ENCODE measurements at regions of chr15 and their contacts with region 1.

Region 1: GRCh38 chr15:35751413-35752133 is 205.6 kb upstream of the DPH6 start:
- DNase-seq: peak; percentile 64
- H3K4me3 ChIP-seq: no peak overlapping the region
- H3K4me3 Mint-ChIP-seq: peak overlapping the region; percentile 16
- H3K27ac Mint-ChIP-seq: no peak overlapping the region
- H3K4me1 ChIP-seq: no peaks in the 10 kb centered on the region
- H3K4me1 Mint-ChIP-seq: no peaks in the 10 kb centered on the region
- H3K27me3 ChIP-seq: no peaks in the 10 kb centered on the region
- H3K27me3 Mint-ChIP-seq: no peaks in the 10 kb centered on the region
- CTCF ChIP-seq: peak; percentile 68 to 76

Region 2: GRCh38 chr15:35545824-35546510 is 205.6 kb before region 1 on chr15 and contains the start of gene DPH6:
- CTCF ChIA-PET with region 1: no interaction called
- POLR2A ChIA-PET with region 1: no interaction called
- intact Hi-C with region 1: loop called (anchors 10 kb)
- DNase-seq: peak; percentile 89 to 90
- H3K4me3 ChIP-seq: peak within 1 kb of the TSS; percentile 48
- H3K4me3 Mint-ChIP-seq: peak within 1 kb of the TSS; percentile 92
- H3K27ac Mint-ChIP-seq: peak within 1 kb of the TSS; percentile 96
- H3K4me1 ChIP-seq: peaks cover 6% of the 10 kb centered on the region; the same call in 1 of the 2 replicates
- H3K4me1 Mint-ChIP-seq: peaks cover 12% of the 10 kb centered on the region
- H3K27me3 ChIP-seq: no peaks in the 10 kb centered on the region
- H3K27me3 Mint-ChIP-seq: no peaks in the 10 kb centered on the region
- CTCF ChIP-seq: peak in 1 of 2 experiments; percentile 11
- total RNA-seq, gene DPH6: 24.0 and 27.1 TPM in 2 replicates

Region 3: DNA sequence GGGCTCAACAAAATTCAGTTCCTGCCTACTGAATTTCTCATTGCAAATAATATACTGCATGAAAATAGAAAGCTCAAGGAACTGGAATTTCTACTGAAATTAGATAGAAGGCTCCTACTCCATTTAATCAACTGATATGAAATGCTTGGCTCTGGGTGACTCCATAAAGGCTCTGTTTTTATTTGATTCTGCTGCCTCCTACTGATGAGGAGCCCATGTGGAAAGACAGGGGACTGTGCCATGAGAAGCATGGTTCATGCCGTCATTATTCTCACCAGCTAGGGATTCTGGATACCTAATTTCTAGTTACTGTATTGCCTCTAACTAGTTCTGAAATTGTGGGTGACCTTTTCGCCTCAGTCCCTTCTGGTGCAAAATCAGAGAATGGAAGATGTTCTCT is 160.6 kb after region 1 on chr15:
- CTCF ChIA-PET with region 1: no interaction called
- POLR2A ChIA-PET with region 1: no interaction called
- intact Hi-C with region 1: loop called (anchors 5 kb)
- DNase-seq: no peak
- H3K4me3 ChIP-seq: no peak overlapping the region
- H3K4me3 Mint-ChIP-seq: no peak overlapping the region
- H3K27ac Mint-ChIP-seq: no peak overlapping the region
- H3K4me1 ChIP-seq: no peaks in the 10 kb centered on the region
- H3K4me1 Mint-ChIP-seq: no peaks in the 10 kb centered on the region
- H3K27me3 ChIP-seq: no peaks in the 10 kb centered on the region
- H3K27me3 Mint-ChIP-seq: no peaks in the 10 kb centered on the region
- CTCF ChIP-seq: no peak

Measured in Caco-2 (cell line).